ENCODE measurements at regions of chr16 and their contacts with region 1.

Region 1: GRCh38 chr16:31873556-31874365 is at the start of gene ZNF267:
- DNase-seq: peak; percentile 94 to 97 (median 96)
- H3K4me3 ChIP-seq: peak within 1 kb of the TSS; percentile 71
- H3K27ac ChIP-seq: peak within 1 kb of the TSS; percentile 82 to 87
- H3K4me1 ChIP-seq: no peaks in the 10 kb centered on the region
- H3K27me3 ChIP-seq: no peaks in the 10 kb centered on the region
- CTCF ChIP-seq: no peak
- EP300 ChIP-seq: no peak
- POLR2A ChIP-seq: peak; percentile 54
- total RNA-seq, gene ZNF267: 10.0 to 16.3 (median 13.6) TPM

Region 2: GRCh38 chr16:30028438-30029076 is 1845.2 kb before region 1 on chr16:
- intact Hi-C with region 1: no loop called
- DNase-seq: peak in 2 of 5 donors; percentile 39 to 50
- H3K4me3 ChIP-seq: no peak overlapping the region
- H3K27ac ChIP-seq: no peak overlapping the region
- H3K4me1 ChIP-seq: no peaks in the 10 kb centered on the region
- H3K27me3 ChIP-seq: peaks cover 3% of the 10 kb centered on the region
- CTCF ChIP-seq: no peak
- EP300 ChIP-seq: no peak
- POLR2A ChIP-seq: no peak

Region 3: DNA sequence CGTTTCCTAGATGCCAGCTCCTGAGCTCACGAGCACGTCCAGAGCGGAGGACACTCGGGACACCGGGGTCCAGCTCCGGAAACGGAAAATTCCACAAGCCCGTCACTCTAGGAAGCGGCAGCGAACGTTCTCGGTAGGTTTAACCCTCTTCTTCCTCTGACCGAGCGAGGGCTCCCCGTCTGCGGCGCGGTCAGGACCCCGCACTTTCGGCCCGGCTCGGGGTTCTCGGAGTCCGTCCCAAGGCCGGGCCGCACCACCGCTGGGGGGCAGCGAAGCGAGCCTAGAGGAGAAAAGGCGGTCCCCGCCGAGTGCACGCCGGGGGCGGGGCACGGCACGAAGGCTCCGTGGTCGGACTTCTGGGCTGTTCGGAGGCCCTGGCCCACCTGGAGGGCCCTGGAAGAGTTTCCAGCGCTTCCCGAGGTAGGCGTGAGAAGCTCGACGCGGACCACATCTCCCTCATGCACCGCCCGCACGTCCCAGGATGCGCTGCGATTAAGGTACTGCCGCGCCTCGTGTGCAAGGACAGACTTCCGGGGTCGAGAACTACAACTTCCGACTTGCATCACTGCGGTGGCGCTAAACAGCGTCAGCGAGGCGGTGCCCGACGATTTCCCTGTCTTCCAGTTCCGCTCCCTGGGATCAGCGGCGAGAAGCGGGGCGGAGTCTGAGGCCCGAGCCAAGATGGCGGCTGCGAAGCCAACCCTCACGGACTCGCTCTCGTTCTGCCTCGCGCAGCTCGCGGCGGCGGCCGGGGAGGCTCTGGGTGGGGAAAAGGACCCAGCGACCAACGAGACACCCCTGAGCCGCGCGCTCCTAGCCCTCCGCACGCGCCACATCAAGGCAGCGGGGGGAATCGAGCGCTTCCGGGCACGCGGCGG is 414.7 kb before region 1 on chr16 and contains the start of gene ARMC5:
- intact Hi-C with region 1: loop called in 1 of 4 experiments (anchors 10 kb)
- DNase-seq: peak; percentile 97 to 98 (median 98)
- H3K4me3 ChIP-seq: peak within 1 kb of the TSS; percentile 87
- H3K27ac ChIP-seq: peak within 1 kb of the TSS; percentile 97 to 98
- H3K4me1 ChIP-seq: peaks cover 16% of the 10 kb centered on the region
- H3K27me3 ChIP-seq: no peaks in the 10 kb centered on the region
- CTCF ChIP-seq: peak; percentile 51 to 81 (median 74)
- EP300 ChIP-seq: peak; percentile 58
- POLR2A ChIP-seq: peak; percentile 86
- total RNA-seq, gene ARMC5: 8.1 to 16.1 (median 11.0) TPM

Measured in ovary (tissue), 10 donors.